ENCODE measurements at regions of chr7 and their contacts with region 1.

Region 1: DNA sequence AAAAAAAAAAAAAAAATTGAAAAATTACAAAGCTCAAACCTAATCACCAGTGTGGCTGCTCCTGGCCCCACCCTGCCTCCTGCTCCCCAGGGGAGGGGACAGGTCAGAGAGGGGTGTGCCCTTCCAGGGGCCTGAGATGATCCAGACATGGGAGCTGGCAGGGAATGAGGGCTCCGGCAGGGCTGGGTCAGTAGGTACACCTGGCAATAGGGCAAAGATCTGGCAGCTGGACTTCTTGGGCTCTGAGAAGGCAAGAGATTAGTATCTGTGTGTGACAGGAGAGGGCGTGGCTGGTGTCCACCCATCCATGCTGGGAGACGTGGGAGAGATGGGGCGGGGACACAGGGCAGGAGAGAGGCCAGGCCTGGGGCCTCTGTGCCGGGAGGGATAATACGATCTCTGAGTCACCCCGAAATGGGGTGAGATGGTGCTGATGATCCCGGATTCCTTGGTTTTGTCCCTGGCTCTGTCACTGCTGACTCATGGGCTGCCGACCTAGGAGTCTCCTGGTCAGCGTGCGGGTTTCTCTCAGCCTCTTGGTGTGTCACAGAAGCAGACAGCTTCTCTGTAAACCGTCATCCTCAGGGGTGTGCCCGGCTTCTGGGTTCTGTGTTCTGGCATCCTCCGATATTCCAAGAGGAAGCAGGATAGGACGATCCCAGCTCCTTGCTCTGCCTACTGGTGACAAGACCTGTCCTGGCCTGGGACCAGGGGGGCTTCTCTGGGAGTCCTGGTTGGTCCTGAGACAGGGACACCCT is 8.3 kb upstream of the CLDN4 start:
- DNase-seq: no peak
- H3K4me3 ChIP-seq: no peak overlapping the region
- H3K27ac ChIP-seq: no peak overlapping the region
- H3K4me1 ChIP-seq: peaks cover 2 to 5% (median 3%) of the 10 kb centered on the region in 4 experiments
- H3K27me3 ChIP-seq: peaks cover 0 to 5% (median 0%) of the 10 kb centered on the region in 4 experiments; a peak in 1 of 7 replicates
- CTCF ChIP-seq: no peak
- EP300 ChIP-seq: no peak
- POLR2A ChIP-seq: no peak
- RAD21 ChIP-seq: no peak

Region 2: GRCh38 chr7:73856941-73857340 is 34.4 kb after region 1 on chr7:
- CTCF ChIA-PET with region 1: interaction called, 22 read pairs
- POLR2A ChIA-PET with region 1: interaction called, 4 read pairs
- DNase-seq: no peak
- H3K4me3 ChIP-seq: no peak overlapping the region
- H3K27ac ChIP-seq: no peak overlapping the region
- H3K4me1 ChIP-seq: no peaks in the 10 kb centered on the region
- H3K27me3 ChIP-seq: peaks cover 0 to 4% (median 0%) of the 10 kb centered on the region in 4 experiments; a peak in 3 of 7 replicates
- CTCF ChIP-seq: no peak
- EP300 ChIP-seq: no peak
- POLR2A ChIP-seq: no peak
- RAD21 ChIP-seq: no peak